K562 (cell line): ENCODE measurements at regions of chr11 and their contacts with region 1.

Region 1: GRCh38 chr11:9550191-9550628 is 23.3 kb upstream of the WEE1 start:
- DNase-seq: peak in 1 of 4 experiments; percentile 71
- ATAC-seq: peak; percentile 9; the same call in 2 of the 3 replicates
- H3K4me3 ChIP-seq: no peak overlapping the region
- H3K27ac ChIP-seq: peak overlapping the region; percentile 85
- H3K4me1 ChIP-seq: peaks cover 26 to 30% of the 10 kb centered on the region in 2 experiments; a peak in 4 of 5 replicates
- H3K27me3 ChIP-seq: no peaks in the 10 kb centered on the region; a peak in 1 of 5 replicates
- CTCF ChIP-seq: no peak
- EP300 ChIP-seq: peak; percentile 70; the same call in 1 of the 2 replicates
- POLR2A ChIP-seq: no peak
- RAD21 ChIP-seq: no peak

Region 2: DNA sequence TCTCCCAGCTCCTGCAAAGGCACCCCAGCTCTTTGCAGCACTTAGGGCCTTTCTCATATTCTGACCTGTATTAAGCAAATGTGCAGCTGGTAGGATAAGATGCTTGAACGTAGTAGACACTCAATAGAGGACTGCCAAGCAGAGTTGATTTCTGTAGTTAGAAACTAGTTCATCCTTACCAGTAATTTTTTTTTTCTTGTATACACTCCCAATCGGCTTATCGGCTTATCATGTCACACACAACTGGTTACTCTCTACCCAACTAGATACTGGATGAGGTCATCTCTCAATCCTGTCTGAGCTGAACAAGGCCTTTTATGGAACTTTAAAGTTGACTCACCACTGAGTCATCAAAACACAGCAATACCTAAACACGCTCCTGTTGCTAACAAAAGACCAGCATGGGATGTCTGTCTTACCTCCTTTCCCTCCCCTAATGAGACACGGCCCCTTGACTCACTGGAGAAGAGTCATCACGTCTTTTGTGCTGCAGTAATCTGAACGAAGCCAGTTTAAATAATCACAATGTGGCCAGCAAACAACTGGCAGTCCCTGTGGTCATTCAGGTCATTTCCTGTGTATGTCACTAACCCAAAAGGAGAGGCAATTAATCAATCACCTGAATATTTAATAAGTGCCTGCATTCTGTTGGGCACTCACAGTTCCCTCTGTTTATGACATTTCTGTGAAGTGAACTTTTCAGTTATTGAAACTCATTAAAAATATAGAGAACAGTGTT is 15.8 kb after region 1 on chr11:
- CTCF ChIA-PET with region 1: no interaction called
- POLR2A ChIA-PET with region 1: interaction called, 33 read pairs
- in situ Hi-C with region 1: no loop called
- intact Hi-C with region 1: no loop called
- DNase-seq: peak; percentile 80 to 97 (median 86)
- ATAC-seq: peak; percentile 94
- H3K4me3 ChIP-seq: no peak overlapping the region
- H3K27ac ChIP-seq: peak overlapping the region; percentile 98
- H3K4me1 ChIP-seq: peaks cover 12 to 44% of the 10 kb centered on the region in 2 experiments
- H3K27me3 ChIP-seq: no peaks in the 10 kb centered on the region
- CTCF ChIP-seq: no peak
- EP300 ChIP-seq: peak; percentile 95
- POLR2A ChIP-seq: peak; percentile 67
- RAD21 ChIP-seq: 0 out of 4 replicates have a peak, but pooled peaks have one; percentile 11 to 12